A673 (cell line): ENCODE measurements at regions of chr1 and their contacts with region 1.

Region 1: GRCh38 chr1:109201123-109201703 is 12.5 kb upstream of the SARS1 start:
- DNase-seq: peak; percentile 89
- H3K4me3 ChIP-seq: no peak overlapping the region
- H3K27ac ChIP-seq: no peak overlapping the region
- H3K4me1 ChIP-seq: peaks cover 5% of the 10 kb centered on the region
- H3K27me3 ChIP-seq: no peaks in the 10 kb centered on the region
- CTCF ChIP-seq: peak; percentile 91

Region 2: GRCh38 chr1:109213785-109214468 is 12.7 kb after region 1 on chr1 and contains the start of gene SARS1:
- CTCF ChIA-PET with region 1: interaction called, 11 read pairs
- POLR2A ChIA-PET with region 1: no interaction called
- intact Hi-C with region 1: no loop called
- DNase-seq: peak; percentile 95
- H3K4me3 ChIP-seq: peak within 1 kb of the TSS; percentile 62
- H3K27ac ChIP-seq: peak within 1 kb of the TSS; percentile 91
- H3K4me1 ChIP-seq: peaks cover 23% of the 10 kb centered on the region
- H3K27me3 ChIP-seq: no peaks in the 10 kb centered on the region
- CTCF ChIP-seq: no peak
- total RNA-seq, gene SARS1: 259 and 320 TPM in 2 replicates

Region 3: DNA sequence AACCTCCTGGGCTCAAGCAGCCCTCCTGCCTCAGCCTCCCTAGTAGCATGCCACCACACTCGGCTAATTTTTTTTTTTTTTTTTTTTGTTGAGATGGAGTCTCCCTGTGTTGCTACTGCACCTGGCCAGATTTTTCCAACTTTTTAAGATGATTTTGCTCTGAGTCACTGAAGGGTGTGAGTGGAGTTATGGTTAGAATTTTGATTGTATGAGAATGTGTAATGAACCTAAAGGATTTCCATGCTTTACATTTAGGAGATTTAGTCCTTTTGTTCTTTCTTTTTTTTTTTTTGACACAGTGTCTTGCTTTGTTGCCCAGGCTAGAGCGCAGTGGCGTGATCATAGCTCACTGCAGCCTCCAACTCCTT is 24.8 kb after region 1 on chr1:
- CTCF ChIA-PET with region 1: no interaction called
- POLR2A ChIA-PET with region 1: no interaction called
- intact Hi-C with region 1: no loop called
- DNase-seq: no peak
- H3K4me3 ChIP-seq: no peak overlapping the region
- H3K27ac ChIP-seq: peak overlapping the region; percentile 4
- H3K4me1 ChIP-seq: peaks cover 48% of the 10 kb centered on the region
- H3K27me3 ChIP-seq: no peaks in the 10 kb centered on the region
- CTCF ChIP-seq: no peak

Region 4: DNA sequence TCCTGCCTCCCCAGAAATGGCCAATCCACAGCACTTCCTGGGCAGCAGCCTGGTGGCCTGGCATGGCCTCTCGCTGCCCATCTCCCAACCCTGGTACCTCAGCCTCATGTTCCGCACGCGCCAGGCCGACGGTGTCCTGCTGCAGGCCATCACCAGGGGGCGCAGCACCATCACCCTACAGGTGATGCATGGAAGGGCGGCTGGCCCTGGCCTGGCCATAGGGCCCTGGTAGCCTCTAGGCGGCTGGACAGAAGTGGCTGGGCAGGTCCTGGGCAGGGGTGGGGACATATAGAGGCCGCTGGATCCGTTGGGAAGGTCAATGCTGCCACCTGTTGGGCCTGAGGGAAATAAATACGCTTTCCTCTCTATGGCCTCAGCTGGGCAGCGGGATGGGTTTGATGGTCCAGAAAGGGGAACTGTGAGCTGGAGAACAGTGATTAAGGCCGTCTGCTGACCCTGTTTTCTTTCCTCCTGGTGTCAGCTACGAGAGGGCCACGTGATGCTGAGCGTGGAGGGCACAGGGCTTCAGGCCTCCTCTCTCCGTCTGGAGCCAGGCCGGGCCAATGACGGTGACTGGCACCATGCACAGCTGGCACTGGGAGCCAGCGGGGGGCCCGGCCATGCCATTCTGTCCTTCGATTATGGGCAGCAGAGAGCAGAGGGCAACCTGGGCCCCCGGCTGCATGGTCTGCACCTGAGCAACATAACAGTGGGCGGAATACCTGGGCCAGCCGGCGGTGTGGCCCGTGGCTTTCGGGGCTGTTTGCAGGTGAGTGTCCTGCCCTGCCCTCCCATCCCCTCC is 62.6 kb after region 1 on chr1:
- CTCF ChIA-PET with region 1: no interaction called
- POLR2A ChIA-PET with region 1: no interaction called
- intact Hi-C with region 1: loop called (anchors 5 kb)
- DNase-seq: peak; percentile 48
- H3K4me3 ChIP-seq: no peak overlapping the region
- H3K27ac ChIP-seq: no peak overlapping the region
- H3K4me1 ChIP-seq: no peaks in the 10 kb centered on the region
- H3K27me3 ChIP-seq: no peaks in the 10 kb centered on the region
- CTCF ChIP-seq: peak; percentile 97

Region 5: DNA sequence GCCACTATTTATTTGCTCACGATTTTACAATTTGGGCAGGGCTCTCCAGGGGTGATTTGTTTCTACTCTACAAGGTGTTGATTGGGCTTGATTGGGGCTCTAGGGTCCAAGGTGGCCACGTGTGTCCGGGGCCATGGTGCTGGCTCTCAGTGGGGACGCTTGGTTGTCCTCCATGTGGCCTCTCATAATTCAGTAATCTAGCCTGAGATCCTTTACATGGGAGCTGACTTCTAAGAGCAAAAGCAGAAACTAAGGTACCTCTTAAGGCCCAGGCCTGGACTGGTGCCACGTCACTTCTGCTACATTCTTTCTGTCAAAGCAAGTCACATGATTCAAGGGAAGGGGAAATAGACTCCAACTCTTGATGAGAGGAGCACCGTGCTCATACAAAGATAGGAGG is 89.8 kb after region 1 on chr1:
- CTCF ChIA-PET with region 1: no interaction called
- POLR2A ChIA-PET with region 1: no interaction called
- intact Hi-C with region 1: no loop called
- DNase-seq: no peak
- H3K4me3 ChIP-seq: no peak overlapping the region
- H3K27ac ChIP-seq: no peak overlapping the region
- H3K4me1 ChIP-seq: no peaks in the 10 kb centered on the region
- H3K27me3 ChIP-seq: peaks cover 2% of the 10 kb centered on the region
- CTCF ChIP-seq: no peak

Region 6: GRCh38 chr1:109397538-109398342 is 196.5 kb after region 1 on chr1 and contains the start of gene SORT1:
- CTCF ChIA-PET with region 1: interaction called, 9 read pairs
- POLR2A ChIA-PET with region 1: no interaction called
- intact Hi-C with region 1: loop called (anchors 5 kb)
- DNase-seq: peak; percentile 97
- H3K4me3 ChIP-seq: peak within 1 kb of the TSS; percentile 60
- H3K27ac ChIP-seq: peak within 1 kb of the TSS; percentile 36
- H3K4me1 ChIP-seq: peaks cover 31% of the 10 kb centered on the region
- H3K27me3 ChIP-seq: no peaks in the 10 kb centered on the region
- CTCF ChIP-seq: no peak
- total RNA-seq, gene SORT1: 52.4 and 56.5 TPM in 2 replicates